Mammary epithelial cell (primary cell): ENCODE measurements at regions of chr15 and their contacts with region 1.

Region 1: GRCh38 chr15:65209701-65210618 is 1.3 kb downstream of the CILP start:
- DNase-seq: no peak
- H3K4me3 ChIP-seq: no peak overlapping the region
- H3K27ac ChIP-seq: no peak overlapping the region
- H3K4me1 ChIP-seq: no peaks in the 10 kb centered on the region
- H3K27me3 ChIP-seq: no peaks in the 10 kb centered on the region
- CTCF ChIP-seq: no peak

Region 2: GRCh38 chr15:65231306-65231705 is 21.3 kb after region 1 on chr15:
- CTCF ChIA-PET with region 1: no interaction called
- dilution Hi-C with region 1: no loop called
- in situ Hi-C with region 1: no loop called
- intact Hi-C with region 1: loop called (anchors 2 kb)
- DNase-seq: no peak
- H3K4me3 ChIP-seq: no peak overlapping the region
- H3K27ac ChIP-seq: no peak overlapping the region
- H3K4me1 ChIP-seq: no peaks in the 10 kb centered on the region
- H3K27me3 ChIP-seq: no peaks in the 10 kb centered on the region
- CTCF ChIP-seq: no peak

Region 3: GRCh38 chr15:65244638-65245037 is 34.7 kb after region 1 on chr15:
- CTCF ChIA-PET with region 1: interaction called, 3 read pairs
- dilution Hi-C with region 1: loop called (anchors 5 kb)
- in situ Hi-C with region 1: no loop called
- intact Hi-C with region 1: no loop called
- DNase-seq: no peak
- H3K4me3 ChIP-seq: no peak overlapping the region
- H3K27ac ChIP-seq: no peak overlapping the region
- H3K4me1 ChIP-seq: peaks cover 14% of the 10 kb centered on the region
- H3K27me3 ChIP-seq: no peaks in the 10 kb centered on the region
- CTCF ChIP-seq: no peak

Region 4: GRCh38 chr15:65286704-65287519 is 77.0 kb after region 1 on chr15 and contains the start of gene PARP16:
- CTCF ChIA-PET with region 1: no interaction called
- dilution Hi-C with region 1: no loop called
- in situ Hi-C with region 1: no loop called
- intact Hi-C with region 1: no loop called
- DNase-seq: peak; percentile 83
- H3K4me3 ChIP-seq: peak within 1 kb of the TSS; percentile 57 to 78 (median 59)
- H3K27ac ChIP-seq: peak within 1 kb of the TSS; percentile 28
- H3K4me1 ChIP-seq: peaks cover 16% of the 10 kb centered on the region
- H3K27me3 ChIP-seq: no peaks in the 10 kb centered on the region
- CTCF ChIP-seq: peak in 1 of 2 donors; percentile 34
- total RNA-seq, gene PARP16: 4.9 to 5.2 TPM